OCI-LY7 (cell line): ENCODE measurements at regions of chr5 and their contacts with region 1.

Region 1: GRCh38 chr5:130198925-130199324 is 294.7 kb downstream of the CHSY3 start:
- DNase-seq: peak; percentile 56
- H3K4me3 ChIP-seq: no peak overlapping the region
- H3K27ac ChIP-seq: no peak overlapping the region
- H3K4me1 ChIP-seq: no peaks in the 10 kb centered on the region
- CTCF ChIP-seq: peak; percentile 75

Region 2: DNA sequence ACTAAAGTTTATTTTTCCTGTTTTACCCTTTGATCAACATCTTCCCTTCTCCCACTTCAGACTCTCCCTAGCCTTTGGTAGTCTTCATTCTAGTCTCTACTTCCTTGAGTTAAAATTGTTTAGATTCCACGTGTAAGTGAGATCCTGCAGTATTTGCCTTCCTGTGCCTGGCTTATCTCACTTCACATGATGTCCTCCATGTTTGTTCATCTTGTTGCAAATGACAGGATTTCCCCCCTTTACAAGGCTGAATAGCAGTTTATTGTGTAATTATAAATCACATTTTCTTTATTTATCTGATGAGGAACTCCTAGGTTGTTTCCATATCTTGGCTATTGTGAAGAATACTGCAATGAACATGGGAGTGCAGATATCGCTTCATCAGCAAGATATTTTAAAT is 167.0 kb after region 1 on chr5:
- CTCF ChIA-PET with region 1: no interaction called
- POLR2A ChIA-PET with region 1: no interaction called
- intact Hi-C with region 1: loop called (anchors 10 kb)
- DNase-seq: no peak
- H3K4me3 ChIP-seq: no peak overlapping the region
- H3K27ac ChIP-seq: no peak overlapping the region
- H3K4me1 ChIP-seq: no peaks in the 10 kb centered on the region
- CTCF ChIP-seq: no peak